Aorta (tissue), 5 donors: ENCODE measurements at regions of chr22 and their contacts with region 1.

Region 1: GRCh38 chr22:50276143-50276542 is 6.0 kb upstream of the MAPK11 start:
- DNase-seq: peak; percentile 81 to 88
- ATAC-seq: peak; percentile 80
- H3K4me3 ChIP-seq: no peak overlapping the region
- H3K27ac ChIP-seq: no peak overlapping the region
- H3K4me1 ChIP-seq: no peaks in the 10 kb centered on the region
- H3K27me3 ChIP-seq: no peaks in the 10 kb centered on the region

Region 2: DNA sequence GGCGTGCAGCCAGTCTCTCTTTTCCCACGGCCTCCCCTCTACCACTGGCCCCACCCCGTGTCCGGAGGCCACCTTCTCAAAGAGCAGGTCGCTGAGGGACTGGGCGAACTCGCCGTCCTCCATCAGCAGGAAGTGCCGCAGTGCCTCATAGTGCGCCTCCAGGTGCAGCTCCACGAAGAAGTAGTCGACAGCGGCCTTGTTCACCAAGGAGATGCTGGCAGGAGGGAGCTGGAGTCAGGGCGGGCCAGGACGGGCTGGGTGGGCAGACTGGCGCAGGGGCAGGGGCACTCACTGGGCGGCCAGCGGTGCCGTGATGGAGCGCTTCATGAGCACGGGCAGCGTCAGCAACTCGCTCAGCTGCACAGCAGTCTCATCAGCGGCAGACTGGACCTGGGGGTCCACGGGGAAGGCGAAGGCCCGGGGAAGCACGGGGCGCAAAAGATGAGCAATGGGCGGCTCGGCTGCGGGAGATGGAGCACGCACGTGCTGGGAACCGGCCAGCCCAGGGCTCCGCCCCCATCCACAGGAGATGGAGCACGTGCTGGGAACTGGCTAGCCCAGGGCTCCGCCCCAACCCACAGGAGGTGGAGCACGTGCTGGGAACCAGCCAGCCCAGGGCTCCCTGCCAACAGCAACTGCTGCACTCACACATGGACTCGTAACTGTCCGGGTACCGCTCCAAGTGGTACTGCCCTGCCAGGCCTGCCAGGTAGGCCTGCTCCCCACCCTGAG is 57.0 kb before region 1 on chr22:
- intact Hi-C with region 1: no loop called
- DNase-seq: peak in 1 of 2 donors; percentile 63
- ATAC-seq: peak; percentile 48
- H3K4me3 ChIP-seq: no peak overlapping the region
- H3K27ac ChIP-seq: no peak overlapping the region
- H3K4me1 ChIP-seq: no peaks in the 10 kb centered on the region
- H3K27me3 ChIP-seq: no peaks in the 10 kb centered on the region

Region 3: DNA sequence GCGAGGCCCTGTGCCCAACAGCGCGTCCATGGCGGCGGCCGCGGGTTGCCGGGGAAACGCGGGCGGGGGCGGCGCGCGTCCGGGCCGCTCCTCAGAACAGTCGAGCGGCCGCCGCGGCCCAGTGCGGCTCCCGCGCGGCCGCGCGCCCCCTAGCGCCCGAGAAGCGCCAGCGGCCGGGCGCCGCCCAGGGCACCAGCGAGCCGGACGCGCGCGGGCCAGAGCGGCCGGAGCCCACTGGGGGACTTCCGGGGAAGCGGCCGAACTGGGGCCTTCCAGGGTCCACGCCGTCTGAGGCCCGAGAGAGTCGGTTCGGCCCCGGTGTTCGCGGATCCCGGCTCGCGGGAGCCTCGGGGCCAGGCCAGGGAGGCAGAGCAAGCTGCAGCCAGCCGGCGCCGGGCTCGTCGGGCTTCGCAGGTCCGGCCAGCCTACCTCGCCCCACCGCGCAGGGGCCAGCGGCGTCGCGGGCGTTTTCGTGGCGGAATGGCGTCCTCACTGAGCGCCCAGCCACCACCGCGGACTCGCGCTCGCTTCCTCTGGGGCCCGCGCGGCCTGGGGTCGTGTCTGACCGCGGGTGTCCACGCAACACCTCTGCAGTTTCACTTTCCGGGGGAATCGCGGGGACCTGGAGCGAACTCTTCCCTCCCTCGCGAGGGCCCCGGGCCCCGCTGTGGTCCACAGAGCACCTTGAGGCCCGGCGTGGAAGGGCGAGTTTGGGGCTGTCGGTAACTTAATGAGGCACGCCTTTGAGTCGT is 51.0 kb after region 1 on chr22 and contains the start of gene DENND6B:
- intact Hi-C with region 1: loop called (anchors 1 to 5 kb)
- DNase-seq: peak; percentile 87 to 93
- ATAC-seq: peak; percentile 97
- H3K4me3 ChIP-seq: peak within 1 kb of the TSS; percentile 46 to 60
- H3K27ac ChIP-seq: peak within 1 kb of the TSS; percentile 4 to 39
- H3K4me1 ChIP-seq: no peaks in the 10 kb centered on the region
- H3K27me3 ChIP-seq: no peaks in the 10 kb centered on the region
- total RNA-seq, gene DENND6B: 2.3 to 7.0 TPM

Region 4: DNA sequence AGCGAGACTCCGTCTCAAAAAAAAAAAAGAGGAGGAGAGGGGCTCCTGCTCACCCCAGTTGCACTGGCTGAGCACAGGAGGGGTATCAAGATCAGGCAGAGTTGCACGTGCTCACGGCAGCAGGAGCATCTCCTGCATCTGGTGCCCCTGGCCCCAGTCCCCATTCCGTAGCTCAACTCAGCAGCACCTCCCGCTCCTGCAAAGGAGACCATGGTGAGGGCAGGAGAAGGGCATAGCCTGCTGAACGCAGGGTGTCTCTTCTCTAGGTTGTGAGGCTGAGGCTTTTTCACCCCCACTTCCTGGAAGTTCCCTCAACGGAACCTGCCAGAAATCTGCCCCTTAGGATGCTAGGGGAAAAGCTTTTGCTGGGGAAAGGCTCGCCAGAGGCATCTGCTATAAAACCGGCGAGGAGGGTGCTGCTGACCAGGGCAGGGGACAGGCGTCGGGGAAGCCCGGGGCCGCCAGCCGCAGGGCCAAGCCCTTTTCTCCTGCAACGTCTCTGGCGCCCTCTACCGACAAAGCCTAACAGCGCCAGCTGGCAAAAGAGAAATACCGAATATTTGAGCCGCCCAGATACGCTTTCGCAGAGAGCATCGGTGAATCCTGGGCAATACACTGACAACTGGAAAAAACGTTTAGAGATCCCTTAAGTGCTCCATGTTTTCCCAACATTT is 66.0 kb after region 1 on chr22:
- intact Hi-C with region 1: loop called in 1 of 2 experiments (anchors 5 kb)
- DNase-seq: peak; percentile 93 to 96
- ATAC-seq: peak; percentile 94
- H3K4me3 ChIP-seq: peak overlapping the region; percentile 17 to 91
- H3K27ac ChIP-seq: no peak overlapping the region
- H3K4me1 ChIP-seq: no peaks in the 10 kb centered on the region
- H3K27me3 ChIP-seq: no peaks in the 10 kb centered on the region